CD8-positive, alpha-beta T cell (primary cell): ENCODE measurements at regions of chr1 and their contacts with region 1.

Region 1: DNA sequence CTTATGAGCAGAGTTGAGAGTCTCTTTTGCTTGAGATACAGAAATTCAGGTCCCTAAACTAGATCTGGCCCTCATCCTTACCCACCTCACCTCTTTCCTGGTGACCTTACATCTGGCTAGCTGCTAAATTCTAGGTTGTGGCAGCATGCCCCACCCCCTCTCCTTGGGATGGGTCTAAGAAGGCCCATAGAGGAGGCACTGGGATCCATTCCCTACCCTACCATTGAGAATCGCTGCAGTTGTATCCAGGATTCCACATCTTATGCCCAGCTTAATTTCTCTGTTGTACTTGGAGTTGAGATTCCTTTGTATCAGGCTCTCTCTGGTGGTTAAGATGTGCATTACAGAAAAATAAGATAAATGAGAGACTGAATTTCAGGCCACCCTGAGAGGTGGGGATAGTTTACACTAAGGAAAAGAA is 9.5 kb upstream of the TMEM39B start:
- DNase-seq: peak in 2 of 9 experiments; percentile 45 to 58
- ATAC-seq: peak; percentile 71
- H3K4me3 ChIP-seq: no peak overlapping the region
- H3K4me3 Mint-ChIP-seq: no peak overlapping the region
- H3K27ac ChIP-seq: no peak overlapping the region
- H3K27ac Mint-ChIP-seq: peak overlapping the region; percentile 0
- H3K4me1 ChIP-seq: peaks cover 12% of the 10 kb centered on the region
- H3K4me1 Mint-ChIP-seq: peaks cover 13% of the 10 kb centered on the region
- H3K27me3 ChIP-seq: no peaks in the 10 kb centered on the region
- H3K27me3 Mint-ChIP-seq: no peaks in the 10 kb centered on the region
- CTCF ChIP-seq: peak; percentile 63

Region 2: GRCh38 chr1:31564134-31564989 is 498.9 kb before region 1 on chr1:
- CTCF ChIA-PET with region 1: no interaction called
- POLR2A ChIA-PET with region 1: no interaction called
- intact Hi-C with region 1: loop called in 1 of 2 experiments (anchors 1 kb)
- DNase-seq: peak in 7 of 9 experiments; percentile 26 to 64 (median 53)
- ATAC-seq: peak; percentile 66
- H3K4me3 ChIP-seq: no peak overlapping the region
- H3K4me3 Mint-ChIP-seq: no peak overlapping the region
- H3K27ac ChIP-seq: no peak overlapping the region
- H3K27ac Mint-ChIP-seq: no peak overlapping the region
- H3K4me1 ChIP-seq: no peaks in the 10 kb centered on the region
- H3K4me1 Mint-ChIP-seq: no peaks in the 10 kb centered on the region
- H3K27me3 ChIP-seq: no peaks in the 10 kb centered on the region
- H3K27me3 Mint-ChIP-seq: peaks cover 27% of the 10 kb centered on the region
- CTCF ChIP-seq: peak; percentile 76

Region 3: DNA sequence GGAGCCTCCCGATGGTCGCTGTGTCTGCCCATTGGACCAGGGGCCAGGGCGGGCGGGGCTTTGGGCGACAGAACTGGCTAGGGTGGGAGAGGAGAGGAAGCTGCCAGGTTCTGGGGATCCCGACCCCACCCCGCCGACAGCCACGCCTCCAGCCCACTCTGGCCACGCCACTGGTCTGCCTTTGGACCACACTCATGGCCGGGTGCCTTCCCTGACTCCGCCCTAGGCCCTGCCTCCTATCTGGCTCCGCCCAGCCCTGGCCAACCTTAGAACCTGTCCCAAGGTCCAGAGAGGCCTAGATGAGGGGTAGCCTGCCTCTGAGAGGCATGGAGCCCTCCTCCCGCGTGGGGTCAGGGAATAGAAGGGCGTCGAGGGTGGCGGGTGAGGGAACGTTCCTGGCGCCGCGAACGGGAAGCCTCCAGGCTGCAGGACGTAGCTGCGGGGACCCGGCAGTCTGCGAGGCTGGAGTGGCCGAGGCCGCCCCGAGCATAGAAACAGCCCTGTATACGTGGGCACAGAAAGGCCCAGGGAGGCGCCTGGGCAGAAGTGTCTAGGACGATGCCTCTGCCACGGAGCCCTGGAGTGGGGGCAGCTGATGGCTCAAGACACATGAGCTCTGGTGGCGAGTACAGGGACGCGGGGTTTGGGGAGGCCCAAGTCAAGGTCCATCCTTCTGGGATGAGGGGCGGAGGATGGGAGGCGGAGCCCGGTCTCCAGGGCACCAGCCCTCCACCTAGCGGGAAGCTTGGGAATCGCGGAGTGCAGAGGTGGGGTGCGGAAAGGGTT is 348.0 kb before region 1 on chr1:
- CTCF ChIA-PET with region 1: no interaction called
- POLR2A ChIA-PET with region 1: no interaction called
- intact Hi-C with region 1: loop called in 1 of 2 experiments (anchors 2 kb)
- DNase-seq: peak in 5 of 9 experiments; percentile 21 to 50 (median 33)
- ATAC-seq: peak; percentile 64
- H3K4me3 ChIP-seq: peak overlapping the region; percentile 15 to 30
- H3K4me3 Mint-ChIP-seq: peak overlapping the region; percentile 71
- H3K27ac ChIP-seq: no peak overlapping the region
- H3K27ac Mint-ChIP-seq: no peak overlapping the region
- H3K4me1 ChIP-seq: peaks cover 19% of the 10 kb centered on the region
- H3K4me1 Mint-ChIP-seq: peaks cover 11% of the 10 kb centered on the region
- H3K27me3 ChIP-seq: peaks cover 12 to 18% of the 10 kb centered on the region in 2 experiments
- H3K27me3 Mint-ChIP-seq: peaks cover 60% of the 10 kb centered on the region
- CTCF ChIP-seq: peak; percentile 32

Region 4: GRCh38 chr1:31977385-31978131 is 85.7 kb before region 1 on chr1:
- CTCF ChIA-PET with region 1: interaction called, 6 read pairs
- POLR2A ChIA-PET with region 1: no interaction called
- intact Hi-C with region 1: loop called in 1 of 2 experiments (anchors 1 kb)
- DNase-seq: peak in 2 of 9 experiments; percentile 26 to 40
- ATAC-seq: no peak
- H3K4me3 ChIP-seq: no peak overlapping the region
- H3K4me3 Mint-ChIP-seq: no peak overlapping the region
- H3K27ac ChIP-seq: no peak overlapping the region
- H3K27ac Mint-ChIP-seq: no peak overlapping the region
- H3K4me1 ChIP-seq: peaks cover 15% of the 10 kb centered on the region
- H3K4me1 Mint-ChIP-seq: peaks cover 22% of the 10 kb centered on the region
- H3K27me3 ChIP-seq: no peaks in the 10 kb centered on the region
- H3K27me3 Mint-ChIP-seq: no peaks in the 10 kb centered on the region
- CTCF ChIP-seq: no peak

Region 5: GRCh38 chr1:32275424-32275823 is 212.2 kb after region 1 on chr1:
- CTCF ChIA-PET with region 1: no interaction called
- POLR2A ChIA-PET with region 1: no interaction called
- intact Hi-C with region 1: no loop called
- DNase-seq: peak in 2 of 9 experiments; percentile 17 to 45
- ATAC-seq: no peak
- H3K4me3 ChIP-seq: peak overlapping the region in 1 of 2 experiments; percentile 53
- H3K4me3 Mint-ChIP-seq: peak overlapping the region; percentile 83
- H3K27ac ChIP-seq: peak overlapping the region; percentile 36 to 49
- H3K27ac Mint-ChIP-seq: peak overlapping the region; percentile 98
- H3K4me1 ChIP-seq: peaks cover 68% of the 10 kb centered on the region
- H3K4me1 Mint-ChIP-seq: peaks cover 62% of the 10 kb centered on the region
- H3K27me3 ChIP-seq: no peaks in the 10 kb centered on the region
- H3K27me3 Mint-ChIP-seq: no peaks in the 10 kb centered on the region
- CTCF ChIP-seq: no peak

Region 6: DNA sequence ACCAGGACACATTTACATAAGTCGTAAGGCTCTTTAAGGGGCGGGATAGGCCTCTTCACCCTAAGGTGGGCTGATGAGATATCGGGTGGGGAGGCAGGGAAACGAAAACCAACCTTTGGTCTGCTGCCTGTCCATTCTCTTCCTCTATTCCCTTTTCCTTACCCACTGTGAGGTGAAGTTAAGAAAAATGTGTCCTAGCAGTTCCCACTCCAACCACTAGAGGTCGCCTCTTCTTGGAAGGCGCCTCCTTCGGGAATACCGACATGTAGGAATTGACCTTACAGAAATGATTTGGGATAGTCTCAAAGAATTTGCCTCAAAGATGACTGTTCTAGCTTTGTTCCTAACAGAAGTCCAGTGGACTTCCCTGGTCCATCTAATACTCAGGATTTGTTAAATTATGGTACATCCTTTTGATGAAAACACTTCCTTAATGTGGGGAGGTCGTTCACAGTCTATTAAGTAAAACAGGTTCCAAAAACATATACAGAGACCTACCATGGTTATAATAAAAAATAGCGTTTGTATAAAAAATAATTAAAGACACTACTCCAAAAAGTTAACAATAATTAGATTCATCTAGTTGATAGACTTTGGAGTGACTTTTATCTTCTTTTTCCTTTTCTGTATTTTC is 1031.8 kb after region 1 on chr1:
- CTCF ChIA-PET with region 1: no interaction called
- POLR2A ChIA-PET with region 1: no interaction called
- intact Hi-C with region 1: loop called in 1 of 2 experiments (anchors 5 kb)
- DNase-seq: peak in 4 of 9 experiments; percentile 29 to 53 (median 36)
- ATAC-seq: no peak
- H3K4me3 ChIP-seq: no peak overlapping the region
- H3K4me3 Mint-ChIP-seq: no peak overlapping the region
- H3K27ac ChIP-seq: no peak overlapping the region
- H3K27ac Mint-ChIP-seq: no peak overlapping the region
- H3K4me1 ChIP-seq: peaks cover 44% of the 10 kb centered on the region
- H3K4me1 Mint-ChIP-seq: peaks cover 37% of the 10 kb centered on the region
- H3K27me3 ChIP-seq: no peaks in the 10 kb centered on the region
- H3K27me3 Mint-ChIP-seq: no peaks in the 10 kb centered on the region
- CTCF ChIP-seq: peak; percentile 79